ENCODE measurements at regions of chr19 and their contacts with region 1.

Region 1: GRCh38 chr19:49801966-49802690 is 11.0 kb downstream of the FUZ start:
- DNase-seq: peak; percentile 93 to 98 (median 96)
- ATAC-seq: peak; percentile 72 to 85
- H3K4me3 ChIP-seq: peak overlapping the region; percentile 13
- H3K27ac ChIP-seq: no peak overlapping the region
- H3K4me1 ChIP-seq: no peaks in the 10 kb centered on the region
- H3K27me3 ChIP-seq: no peaks in the 10 kb centered on the region

Region 2: DNA sequence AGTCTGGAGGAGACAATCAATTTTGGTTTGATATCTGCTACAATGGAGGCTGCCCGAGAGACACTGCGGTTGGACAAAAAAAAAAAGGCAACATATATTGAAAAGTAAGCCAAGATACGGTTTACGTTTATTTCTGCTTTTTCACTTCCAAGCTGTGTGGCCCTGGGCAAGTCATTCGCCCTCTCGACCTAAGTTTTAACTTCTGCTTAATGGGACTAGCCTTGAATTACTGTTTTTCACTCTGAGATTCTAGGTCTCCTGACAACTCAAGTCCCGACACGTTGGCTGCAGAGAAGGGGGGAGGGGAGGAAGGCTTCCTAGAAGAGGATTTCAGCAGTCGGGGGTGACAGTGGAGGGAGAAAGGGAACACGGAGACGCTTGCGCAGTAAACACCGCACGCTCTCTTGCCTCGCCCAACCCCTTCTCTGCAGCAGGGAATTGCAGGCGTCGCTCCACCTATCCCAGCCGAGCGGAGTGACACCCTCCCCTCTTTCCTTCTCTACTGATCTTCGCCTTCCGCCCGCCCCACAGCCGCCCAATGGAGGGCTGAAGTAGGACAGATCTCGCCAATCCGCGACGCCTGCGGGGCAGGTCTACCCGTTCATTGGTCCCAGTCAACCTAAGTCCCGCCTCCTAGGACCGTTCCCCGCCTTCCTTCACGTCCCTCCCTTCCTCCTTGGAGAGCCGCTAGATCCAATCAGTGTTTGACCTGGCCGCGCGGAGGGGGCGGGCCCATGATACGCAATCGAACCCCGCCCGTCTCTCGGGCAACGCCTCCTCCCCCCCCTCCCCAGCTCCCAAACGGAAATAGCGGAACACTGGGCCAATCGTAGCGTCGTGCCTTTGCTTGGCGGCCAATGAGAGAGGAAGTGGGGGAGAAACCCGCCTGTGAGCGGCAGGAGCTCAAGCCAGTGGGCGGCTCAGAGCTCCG is 35.9 kb before region 1 on chr19:
- intact Hi-C with region 1: loop called in 1 of 4 experiments (anchors 5 kb)
- DNase-seq: peak; percentile 100
- ATAC-seq: peak; percentile 94 to 96
- H3K4me3 ChIP-seq: peak overlapping the region; percentile 56
- H3K27ac ChIP-seq: peak overlapping the region; percentile 96
- H3K4me1 ChIP-seq: peaks cover 5% of the 10 kb centered on the region
- H3K27me3 ChIP-seq: no peaks in the 10 kb centered on the region

Region 3: DNA sequence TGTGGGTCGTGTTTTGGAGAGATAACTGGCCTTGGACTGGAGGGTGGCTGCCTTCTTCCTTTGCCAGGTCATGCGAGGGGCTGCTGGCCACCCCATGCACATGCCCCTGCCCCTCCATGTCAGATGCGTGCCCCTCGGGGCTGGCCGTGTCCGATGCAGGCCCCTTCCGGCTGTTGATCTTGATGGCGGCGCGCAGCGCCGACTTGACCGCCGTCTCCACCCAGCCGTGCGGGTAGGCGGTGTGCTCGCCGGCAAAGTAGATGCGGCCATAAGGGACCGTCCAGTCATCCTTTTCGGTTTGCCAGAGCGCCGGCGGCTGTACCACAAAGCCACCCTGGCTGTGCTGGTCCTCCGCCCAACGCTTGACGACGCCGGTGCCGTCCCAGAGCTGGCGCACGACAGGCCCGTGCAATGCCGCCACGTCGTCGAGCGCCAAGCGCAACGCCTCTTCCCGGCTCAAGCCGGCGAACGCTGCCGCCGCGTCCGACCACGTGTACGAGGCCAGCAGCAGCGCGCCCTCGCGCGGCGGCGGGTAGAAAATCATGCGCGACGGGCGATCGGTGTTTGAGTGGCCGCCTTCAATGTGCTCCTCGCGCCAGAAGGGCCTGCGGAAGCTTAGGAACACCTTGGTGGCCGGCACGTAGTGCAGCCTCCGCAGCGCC is 87.7 kb after region 1 on chr19:
- intact Hi-C with region 1: no loop called
- DNase-seq: peak; percentile 83 to 91 (median 91)
- ATAC-seq: peak; percentile 55 to 71
- H3K4me3 ChIP-seq: no peak overlapping the region
- H3K27ac ChIP-seq: no peak overlapping the region
- H3K4me1 ChIP-seq: no peaks in the 10 kb centered on the region
- H3K27me3 ChIP-seq: no peaks in the 10 kb centered on the region